ENCODE measurements at regions of chr1 and their contacts with region 1.

Region 1: DNA sequence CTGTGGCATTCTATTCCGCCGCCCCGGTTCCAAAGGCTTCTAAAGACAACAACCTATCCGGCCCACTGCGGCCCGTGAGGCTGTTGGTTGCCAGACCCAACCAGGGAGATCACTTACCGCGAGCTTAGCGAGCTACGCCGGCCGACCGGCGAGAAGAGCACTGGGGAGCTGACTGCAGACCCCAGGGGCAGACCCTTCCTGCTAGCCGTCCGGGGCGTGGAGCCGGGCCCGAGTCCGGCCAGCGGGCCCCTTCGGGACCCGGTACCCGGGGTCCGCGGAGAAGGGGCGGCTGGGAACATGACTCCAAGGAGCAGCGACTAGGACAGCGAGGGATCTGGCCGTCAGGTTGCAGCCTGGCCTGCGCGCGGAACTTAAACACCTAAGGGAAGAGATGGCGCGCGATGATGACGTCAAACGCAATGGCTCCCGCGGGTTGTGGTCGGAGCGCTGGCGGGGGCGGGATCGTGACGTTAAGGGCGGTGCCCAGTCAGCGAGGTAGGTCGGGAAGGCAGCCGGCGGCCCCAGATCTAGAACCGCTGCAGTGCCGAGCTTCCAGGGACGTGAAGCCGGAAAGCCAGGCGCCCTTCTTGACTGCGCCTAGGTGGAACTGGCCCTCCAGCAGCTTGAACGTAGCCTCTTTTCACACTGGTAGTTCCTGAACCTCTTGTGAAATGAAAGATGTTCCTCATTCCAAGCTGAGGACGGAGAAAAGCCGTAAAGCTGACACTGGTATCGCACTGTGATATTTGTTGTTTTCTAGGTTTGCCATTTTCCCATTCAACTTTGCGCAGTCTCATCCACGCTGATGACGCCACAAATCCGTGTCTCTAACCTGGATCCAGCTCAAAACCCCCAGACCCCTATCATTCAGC is at the start of gene NUP133:
- DNase-seq: peak; percentile 92
- CTCF ChIP-seq: no peak

Region 2: GRCh38 chr1:229258031-229258756 is 250.0 kb before region 1 on chr1:
- in situ Hi-C with region 1: loop called (anchors 10 kb)
- DNase-seq: peak; percentile 55
- CTCF ChIP-seq: peak; percentile 70

Region 3: DNA sequence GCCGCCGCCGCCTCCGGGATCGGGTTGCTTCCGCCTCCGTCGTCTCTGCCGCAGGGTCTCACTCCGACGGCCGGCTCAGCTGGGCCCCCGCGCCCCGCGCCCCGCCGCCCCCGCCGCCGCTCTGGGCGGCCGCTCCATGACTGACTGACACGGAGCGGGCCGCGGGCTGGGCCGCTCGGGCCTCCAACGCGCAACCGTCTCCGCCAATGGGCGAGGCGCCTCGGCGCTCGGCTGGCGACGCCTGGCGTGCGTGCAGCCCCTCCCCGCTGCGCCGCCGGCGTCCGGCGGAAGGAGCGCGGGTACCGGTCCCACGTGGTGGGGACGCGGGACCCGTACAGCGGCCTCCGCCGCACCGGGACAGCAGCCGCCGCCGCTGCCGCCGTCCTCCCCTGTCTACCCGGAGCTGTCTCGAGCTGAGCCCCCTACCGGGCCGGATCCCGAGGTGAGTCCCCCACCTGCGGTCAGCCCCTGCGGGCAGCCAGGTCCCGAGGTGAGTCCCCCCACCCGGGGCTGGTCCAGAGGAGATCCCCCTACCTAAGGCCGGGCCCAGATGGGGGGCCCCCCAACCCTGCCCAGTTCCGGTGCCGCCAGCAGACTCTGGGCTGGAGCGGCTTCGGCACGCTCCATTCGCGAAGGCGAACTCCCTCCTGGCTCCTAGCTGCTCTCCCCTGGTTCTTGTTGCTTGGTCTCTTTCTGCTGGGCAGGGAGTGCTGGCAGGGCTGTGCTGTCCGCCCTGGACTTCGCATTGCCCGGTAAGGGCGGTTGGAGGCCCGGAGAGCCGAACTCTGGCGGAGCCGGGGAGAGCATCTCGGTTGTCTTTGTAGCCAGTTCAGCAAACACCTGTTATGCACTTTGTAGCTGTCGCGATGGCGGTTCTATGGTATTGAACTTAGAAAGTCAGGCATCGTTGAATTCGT is 118.0 kb after region 1 on chr1 and contains the starts of genes TAF5L and URB2:
- in situ Hi-C with region 1: no loop called
- DNase-seq: peak; percentile 98
- CTCF ChIP-seq: no peak